Pancreas (tissue), 10 donors: ENCODE measurements at regions of chr18 and their contacts with region 1.

Region 1: DNA sequence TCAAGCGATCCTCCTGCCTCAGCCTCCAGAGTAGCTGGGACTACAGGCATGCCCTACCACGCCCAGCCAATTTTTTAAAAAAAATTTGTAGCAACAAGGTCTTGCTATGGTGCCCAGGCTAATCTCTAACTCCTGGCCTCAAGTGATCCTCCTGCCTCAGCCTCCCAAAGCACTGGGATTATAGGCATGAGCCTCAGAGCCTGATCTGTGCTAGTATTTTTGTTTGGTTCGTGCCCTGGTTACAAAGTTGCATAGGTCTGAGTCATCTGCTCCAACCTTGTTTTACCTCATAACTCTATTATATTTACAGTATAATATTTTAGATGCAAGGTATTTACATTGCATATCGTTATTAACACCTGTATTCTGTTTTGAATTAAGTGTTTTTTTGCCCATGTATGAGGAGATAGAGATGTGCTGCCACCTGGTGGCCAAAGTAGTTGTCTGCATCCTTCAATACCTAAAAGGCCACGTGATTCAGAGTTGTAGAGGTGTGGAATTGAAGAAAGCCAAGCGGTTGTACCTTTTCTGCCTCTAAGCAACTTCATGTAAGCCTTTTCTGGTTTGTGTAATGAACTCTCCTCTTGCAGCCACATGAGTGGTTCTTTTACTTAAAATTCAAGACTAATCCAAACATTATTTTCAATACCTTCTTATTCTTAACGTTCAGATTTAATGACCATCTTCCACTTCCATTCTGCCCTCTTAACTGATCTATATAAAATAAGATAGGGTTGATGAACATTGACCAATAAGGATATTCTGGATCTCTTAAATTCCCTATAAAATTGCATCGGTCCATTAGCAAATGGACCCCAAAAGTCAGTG is 19.9 kb upstream of the CABYR start:
- DNase-seq: peak in 5 of 6 donors; percentile 47 to 85 (median 79)
- ATAC-seq: peak; percentile 83 to 97 (median 92)
- H3K4me3 ChIP-seq: no peak overlapping the region
- H3K27ac ChIP-seq: no peak overlapping the region
- H3K4me1 ChIP-seq: peaks cover 9 to 14% (median 14%) of the 10 kb centered on the region in 3 donors
- H3K27me3 ChIP-seq: no peaks in the 10 kb centered on the region
- CTCF ChIP-seq: peak; percentile 89 to 93 (median 92)

Region 2: GRCh38 chr18:23958036-23958435 is 160.9 kb before region 1 on chr18:
- intact Hi-C with region 1: loop called in 1 of 3 experiments (anchors 10 kb)
- DNase-seq: peak in 1 of 6 donors; percentile 33
- ATAC-seq: peak in 3 of 4 donors; percentile 15 to 55 (median 22)
- H3K4me3 ChIP-seq: no peak overlapping the region
- H3K27ac ChIP-seq: no peak overlapping the region
- H3K4me1 ChIP-seq: no peaks in the 10 kb centered on the region
- H3K27me3 ChIP-seq: no peaks in the 10 kb centered on the region
- CTCF ChIP-seq: no peak

Region 3: DNA sequence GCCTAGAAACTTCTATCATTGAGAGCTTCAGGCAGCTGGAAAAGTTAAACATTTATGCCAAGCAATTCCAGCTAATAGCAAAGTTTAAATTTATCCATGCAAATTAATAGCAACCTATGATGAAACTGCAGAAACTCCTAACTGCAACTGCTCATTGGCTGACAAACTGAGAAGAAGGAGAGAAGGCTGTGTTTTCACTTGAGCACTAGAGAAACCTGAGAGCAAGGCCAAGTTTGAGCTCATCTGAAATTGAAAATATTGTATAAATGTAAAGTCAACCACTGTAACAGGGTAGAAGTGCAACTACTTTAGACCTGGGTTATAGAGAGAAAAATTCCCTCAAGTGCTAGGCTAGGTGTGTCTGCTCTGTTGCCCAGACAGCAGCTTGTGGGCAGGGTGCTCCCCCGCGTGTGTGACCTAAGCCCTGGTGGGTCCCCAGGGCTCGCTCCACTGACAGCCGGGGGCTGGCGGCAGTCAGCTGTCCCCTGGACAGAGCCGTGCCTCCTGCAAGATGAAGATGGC is 70.1 kb after region 1 on chr18:
- intact Hi-C with region 1: no loop called
- DNase-seq: no peak
- ATAC-seq: peak in 2 of 4 donors; percentile 42 to 60
- H3K4me3 ChIP-seq: no peak overlapping the region
- H3K27ac ChIP-seq: no peak overlapping the region
- H3K4me1 ChIP-seq: no peaks in the 10 kb centered on the region
- H3K27me3 ChIP-seq: no peaks in the 10 kb centered on the region
- CTCF ChIP-seq: no peak